Dorsolateral prefrontal cortex (tissue), 120 donors: ENCODE measurements at regions of chr17 and their contacts with region 1.

Region 1: GRCh38 chr17:55356434-55357328 is 65.0 kb downstream of the MMD start:
- DNase-seq: peak in 9 of 10 donors; percentile 28 to 90 (median 60)
- H3K4me3 ChIP-seq: no peak overlapping the region
- H3K27ac ChIP-seq: no peak overlapping the region
- H3K27me3 ChIP-seq: no peaks in the 10 kb centered on the region
- CTCF ChIP-seq: peak; percentile 58 to 92 (median 84)

Region 2: DNA sequence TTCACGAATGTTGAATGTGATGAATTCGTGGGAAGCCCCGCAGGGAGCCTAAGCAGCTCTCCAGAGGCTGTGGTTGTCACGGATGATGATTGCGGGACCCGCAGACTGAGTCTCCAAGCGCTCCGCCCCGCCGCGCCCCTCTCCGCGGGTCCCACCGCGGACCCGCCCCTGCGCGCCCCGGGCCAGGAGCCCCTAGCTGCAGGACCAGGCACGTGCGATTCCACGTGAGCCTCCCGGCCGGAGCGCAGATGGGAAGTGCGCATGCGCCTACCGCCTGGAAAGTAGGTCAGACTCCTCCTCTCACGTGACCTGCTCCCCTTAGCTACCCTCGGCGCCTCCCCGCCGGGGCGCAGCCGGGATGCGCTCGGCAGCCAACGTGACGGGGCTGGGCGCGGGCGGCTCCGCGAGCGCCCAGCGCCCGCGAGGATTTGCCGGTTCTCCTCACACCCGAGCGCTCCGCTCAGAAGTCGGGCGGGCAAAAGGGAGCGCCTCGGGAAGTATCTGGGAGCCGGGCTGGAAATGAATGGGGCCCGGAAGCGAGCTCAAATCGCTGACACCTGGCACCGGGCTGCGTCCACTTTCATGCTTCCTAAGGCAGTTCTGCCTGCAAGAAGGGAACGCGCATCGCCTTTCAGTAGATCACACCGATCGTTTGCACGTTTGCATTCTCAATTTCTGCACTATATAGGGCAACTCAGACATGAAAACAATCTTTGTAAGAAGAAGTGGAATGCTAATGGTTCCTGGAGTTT is 118.3 kb before region 1 on chr17:
- intact Hi-C with region 1: loop called in 1 of 2 experiments (anchors 5 kb)
- DNase-seq: peak; percentile 91 to 96 (median 94)
- H3K4me3 ChIP-seq: peak overlapping the region; percentile 39 to 79 (median 66)
- H3K27ac ChIP-seq: peak overlapping the region in 58 of 59 donors; percentile 53 to 98 (median 90)
- H3K27me3 ChIP-seq: no peaks in the 10 kb centered on the region
- CTCF ChIP-seq: peak in 40 of 56 donors; percentile 5 to 63 (median 29)

Region 3: GRCh38 chr17:55421179-55421934 is 64.7 kb after region 1 on chr17 and contains the start of gene MMD:
- intact Hi-C with region 1: loop called in 1 of 2 experiments (anchors 5 kb)
- DNase-seq: peak in 6 of 10 donors; percentile 15 to 56 (median 34)
- H3K4me3 ChIP-seq: peak within 1 kb of the TSS; percentile 65 to 99 (median 92)
- H3K27ac ChIP-seq: peak within 1 kb of the TSS in 58 of 59 donors; percentile 3 to 95 (median 80)
- H3K27me3 ChIP-seq: no peaks in the 10 kb centered on the region
- CTCF ChIP-seq: no peak
- total RNA-seq, gene MMD: 29.5 to 73.9 (median 45.2) TPM

Region 4: GRCh38 chr17:55513885-55514591 is 157.4 kb after region 1 on chr17:
- intact Hi-C with region 1: loop called in 1 of 2 experiments (anchors 5 kb)
- DNase-seq: peak in 7 of 10 donors; percentile 43 to 89 (median 49)
- H3K4me3 ChIP-seq: peak overlapping the region in 13 of 59 donors; percentile 3 to 39 (median 22)
- H3K27ac ChIP-seq: no peak overlapping the region
- H3K27me3 ChIP-seq: peaks cover 0 to 2% (median 0%) of the 10 kb centered on the region in 45 donors
- CTCF ChIP-seq: peak; percentile 78 to 98 (median 92)